ENCODE measurements at regions of chr5 and their contacts with region 1.

Region 1: GRCh38 chr5:91110686-91111085 is 272.4 kb downstream of the ARRDC3 start:
- DNase-seq: no peak
- ATAC-seq: peak; percentile 60 to 78

Region 2: GRCh38 chr5:91151947-91152346 is 41.3 kb after region 1 on chr5:
- intact Hi-C with region 1: loop called in 1 of 2 experiments (anchors 5 kb)
- DNase-seq: peak; percentile 40
- ATAC-seq: peak; percentile 92

Region 3: GRCh38 chr5:91219803-91220371 is 109.2 kb after region 1 on chr5:
- intact Hi-C with region 1: loop called in 1 of 2 experiments (anchors 10 kb)
- DNase-seq: no peak
- ATAC-seq: peak; percentile 27 to 42

Region 4: GRCh38 chr5:91280362-91281269 is 169.9 kb after region 1 on chr5:
- intact Hi-C with region 1: loop called in 1 of 2 experiments (anchors 10 kb)
- DNase-seq: peak; percentile 95
- ATAC-seq: peak; percentile 98